ENCODE measurements at regions of chr16 and their contacts with region 1.

Region 1: DNA sequence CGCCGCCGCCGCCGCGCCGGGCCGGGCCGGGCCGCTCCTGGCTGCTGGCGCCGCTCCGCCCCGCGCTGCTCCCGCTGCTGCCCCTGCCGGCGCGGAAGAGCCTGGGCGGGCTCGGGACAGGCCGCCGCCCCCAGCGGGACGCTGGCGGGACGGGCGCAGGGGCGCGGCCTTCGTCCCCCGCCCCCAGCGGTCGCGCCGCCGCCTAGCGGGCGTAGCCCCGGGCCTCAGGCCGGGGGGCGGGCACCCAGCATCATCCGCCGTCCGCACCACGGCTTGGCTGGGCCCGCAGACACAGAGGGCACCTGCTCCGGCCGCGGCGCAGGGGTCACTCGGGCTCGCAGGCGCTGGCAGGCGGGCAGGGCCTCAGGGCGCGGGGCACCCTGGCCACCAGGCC is at the start of gene AMFR:
- H3K4me3 Mint-ChIP-seq: peak within 1 kb of the TSS; percentile 97
- H3K27ac Mint-ChIP-seq: peak within 1 kb of the TSS; percentile 87
- H3K4me1 Mint-ChIP-seq: peaks cover 37% of the 10 kb centered on the region
- H3K27me3 Mint-ChIP-seq: no peaks in the 10 kb centered on the region

Region 2: GRCh38 chr16:56450986-56451752 is 25.7 kb after region 1 on chr16 and contains the starts of genes NUDT21 and OGFOD1:
- intact Hi-C with region 1: loop called (anchors 1 kb)
- H3K4me3 Mint-ChIP-seq: peak within 1 kb of the TSS; percentile 89
- H3K27ac Mint-ChIP-seq: peak within 1 kb of the TSS; percentile 87
- H3K4me1 Mint-ChIP-seq: peaks cover 29% of the 10 kb centered on the region
- H3K27me3 Mint-ChIP-seq: no peaks in the 10 kb centered on the region